Activated T-helper 2 cell treated with anti-CD3 and anti-CD28 coated beads, Interferon-gamma antibody, Interleukin-2, Interleukin-4, amounts not matched to agents 10 μg/mL and 5 μg/mL and 100 μg/mL, durations not matched to agents 14 hours and 24 hours and 36 hours (primary cell): ENCODE measurements at regions of chr3 and their contacts with region 1.

Region 1: GRCh38 chr3:156554842-156555687 is at the start of gene SSR3:
- DNase-seq: peak; percentile 98
- H3K4me3 Mint-ChIP-seq: peak within 1 kb of the TSS; percentile 96
- H3K27ac Mint-ChIP-seq: peak within 1 kb of the TSS; percentile 92
- H3K4me1 Mint-ChIP-seq: peaks cover 47% of the 10 kb centered on the region
- H3K27me3 Mint-ChIP-seq: no peaks in the 10 kb centered on the region
- total RNA-seq, gene SSR3: 193 and 197 TPM in 2 replicates

Region 2: DNA sequence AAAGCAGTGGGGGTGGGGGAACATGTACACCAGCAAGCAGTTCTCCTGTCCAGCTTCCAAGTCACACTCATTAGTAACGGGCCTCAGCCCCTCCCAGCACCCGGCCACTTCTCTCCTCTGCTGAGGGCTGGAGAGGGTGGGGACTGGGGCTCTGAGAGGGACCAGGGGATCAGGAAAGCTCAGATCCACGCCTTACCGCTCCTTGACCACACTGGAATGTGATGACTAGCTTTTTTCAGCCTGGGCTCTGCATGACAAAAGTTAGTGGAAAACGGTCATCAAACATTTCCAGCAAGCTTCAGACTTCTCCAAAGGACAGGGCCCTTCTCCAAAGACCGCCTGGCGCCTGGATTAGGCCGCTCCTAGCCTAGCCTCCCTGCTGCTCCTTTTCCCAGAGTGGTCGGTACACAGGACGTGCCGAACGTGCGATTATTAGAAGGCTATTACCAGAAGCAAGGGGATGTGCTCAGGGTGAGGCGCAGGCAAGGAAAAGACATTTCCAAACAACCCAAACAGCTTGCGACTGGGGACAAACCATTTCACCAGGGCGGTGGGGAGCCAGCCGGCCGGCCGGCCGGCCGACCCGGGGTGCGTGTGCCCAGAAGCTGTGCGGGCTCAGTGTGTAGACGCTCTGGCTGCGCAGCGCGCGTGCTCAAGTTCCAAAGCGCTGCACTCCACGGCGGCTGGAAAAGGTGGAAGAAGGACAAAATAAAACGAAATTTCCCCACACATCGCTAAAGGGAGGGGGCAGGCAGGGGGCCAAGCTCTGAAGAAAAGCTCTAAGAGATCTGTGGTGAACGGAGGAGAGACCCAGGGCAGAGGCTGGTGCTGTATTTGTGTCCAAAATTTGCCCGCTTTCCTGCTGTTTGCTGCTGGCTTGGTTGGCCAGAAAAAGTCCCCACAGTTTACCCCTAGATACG is 50.9 kb after region 1 on chr3:
- intact Hi-C with region 1: loop called (anchors 2 kb)
- DNase-seq: no peak
- H3K4me3 Mint-ChIP-seq: peak overlapping the region; percentile 73
- H3K27ac Mint-ChIP-seq: no peak overlapping the region
- H3K4me1 Mint-ChIP-seq: peaks cover 41% of the 10 kb centered on the region
- H3K27me3 Mint-ChIP-seq: peaks cover 7% of the 10 kb centered on the region

Region 3: DNA sequence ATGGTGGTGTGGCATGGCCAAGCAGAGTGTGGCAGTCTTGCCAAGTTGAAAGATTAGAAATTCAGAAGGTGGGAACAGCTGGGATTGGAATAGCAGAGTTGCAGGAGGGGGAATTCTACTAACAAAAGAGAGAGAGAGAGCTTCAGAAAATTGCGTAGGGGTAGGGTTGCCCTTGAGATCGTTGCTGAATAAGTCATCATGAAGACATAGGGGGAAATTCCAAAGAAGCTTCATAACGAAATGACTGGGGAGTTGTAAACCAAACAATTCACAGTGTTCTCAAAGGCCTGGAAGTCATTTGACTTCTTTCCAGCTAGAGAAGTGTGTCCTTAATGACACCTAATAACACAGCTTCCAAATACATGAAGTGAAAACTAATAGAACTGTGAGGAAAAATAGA is 93.0 kb after region 1 on chr3:
- intact Hi-C with region 1: no loop called
- DNase-seq: no peak
- H3K4me3 Mint-ChIP-seq: no peak overlapping the region
- H3K27ac Mint-ChIP-seq: no peak overlapping the region
- H3K4me1 Mint-ChIP-seq: peaks cover 25% of the 10 kb centered on the region
- H3K27me3 Mint-ChIP-seq: peaks cover 13% of the 10 kb centered on the region

Region 4: DNA sequence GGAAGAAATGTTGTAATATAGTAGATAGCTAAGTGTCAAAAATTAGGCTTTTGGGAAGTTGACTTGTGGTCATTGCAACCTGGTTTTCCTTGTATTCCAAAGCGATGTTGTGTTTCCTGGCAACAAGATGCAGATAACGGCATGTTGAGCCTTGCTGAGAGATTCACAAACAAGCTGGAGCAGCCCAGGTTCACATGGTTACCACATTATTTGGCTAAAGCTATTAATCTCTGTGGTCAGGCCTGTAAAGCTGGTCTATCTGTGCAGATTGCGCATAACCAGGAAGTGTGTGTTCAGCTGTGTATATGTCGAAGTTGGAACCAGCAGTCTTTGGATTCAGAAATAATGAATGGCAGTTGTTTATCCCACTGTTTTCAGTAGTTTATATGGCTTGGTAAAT is 125.9 kb after region 1 on chr3:
- intact Hi-C with region 1: no loop called
- DNase-seq: no peak
- H3K4me3 Mint-ChIP-seq: peak overlapping the region; percentile 49
- H3K27ac Mint-ChIP-seq: no peak overlapping the region
- H3K4me1 Mint-ChIP-seq: peaks cover 76% of the 10 kb centered on the region
- H3K27me3 Mint-ChIP-seq: no peaks in the 10 kb centered on the region

Region 5: GRCh38 chr3:157081681-157082210 is 526.7 kb after region 1 on chr3:
- intact Hi-C with region 1: loop called (anchors 2 kb)
- DNase-seq: peak; percentile 73
- H3K4me3 Mint-ChIP-seq: no peak overlapping the region
- H3K27ac Mint-ChIP-seq: peak overlapping the region; percentile 47
- H3K4me1 Mint-ChIP-seq: peaks cover 47% of the 10 kb centered on the region
- H3K27me3 Mint-ChIP-seq: no peaks in the 10 kb centered on the region

Region 6: GRCh38 chr3:157159762-157160657 is 604.9 kb after region 1 on chr3 and contains the start of gene CCNL1:
- intact Hi-C with region 1: loop called (anchors 1 kb)
- DNase-seq: peak; percentile 95
- H3K4me3 Mint-ChIP-seq: peak within 1 kb of the TSS; percentile 99
- H3K27ac Mint-ChIP-seq: peak within 1 kb of the TSS; percentile 98
- H3K4me1 Mint-ChIP-seq: peaks cover 52% of the 10 kb centered on the region
- H3K27me3 Mint-ChIP-seq: no peaks in the 10 kb centered on the region
- total RNA-seq, gene CCNL1: 160 and 167 TPM in 2 replicates